ENCODE measurements at regions of chr12 and their contacts with region 1.

Region 1: DNA sequence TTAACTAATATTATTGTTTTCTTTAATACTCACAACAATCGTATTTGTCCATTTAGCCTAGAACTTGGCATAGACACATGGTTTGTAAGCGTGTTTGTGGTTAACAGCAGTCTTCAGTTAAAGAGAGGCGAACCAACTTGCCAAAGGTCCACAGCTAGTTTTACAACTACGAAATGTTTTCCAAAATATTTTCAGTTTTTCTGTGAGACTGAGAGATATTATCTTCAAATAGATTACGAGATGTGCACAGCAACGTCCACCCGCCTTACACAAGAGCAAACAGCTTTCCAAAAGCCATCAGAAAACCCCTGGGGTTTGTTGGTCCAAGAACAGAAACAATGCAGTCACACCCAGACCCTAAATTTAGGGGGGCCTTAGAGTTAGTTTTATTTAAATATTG is 58.6 kb upstream of the RASSF3 start:
- DNase-seq: no peak
- ATAC-seq: no peak
- H3K4me3 ChIP-seq: no peak overlapping the region
- H3K4me3 Mint-ChIP-seq: no peak overlapping the region
- H3K27ac ChIP-seq: no peak overlapping the region
- H3K27ac Mint-ChIP-seq: no peak overlapping the region
- H3K4me1 ChIP-seq: peaks cover 0 to 3% of the 10 kb centered on the region in 2 donors
- H3K4me1 Mint-ChIP-seq: no peaks in the 10 kb centered on the region
- H3K27me3 ChIP-seq: no peaks in the 10 kb centered on the region
- H3K27me3 Mint-ChIP-seq: no peaks in the 10 kb centered on the region
- CTCF ChIP-seq: no peak

Region 2: DNA sequence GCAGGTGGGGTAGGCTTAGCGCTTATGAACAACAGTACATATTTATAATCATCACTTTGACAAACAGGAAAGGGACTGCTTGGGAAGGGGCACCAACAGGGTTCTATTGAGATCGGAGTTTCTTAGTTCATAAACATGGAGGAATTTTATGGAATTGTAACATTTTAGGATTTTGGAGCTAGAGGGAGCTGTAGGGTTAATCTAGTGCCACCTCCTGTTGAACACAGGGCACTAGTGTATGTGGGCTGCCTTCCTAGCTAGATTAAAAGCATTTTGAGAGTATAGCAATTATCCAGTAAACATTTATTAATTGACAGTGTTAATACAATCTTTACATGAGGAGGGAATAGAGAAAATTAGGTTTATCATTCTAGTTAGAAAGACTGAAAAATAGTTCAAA is 249.7 kb after region 1 on chr12:
- CTCF ChIA-PET with region 1: interaction called, 10 read pairs
- POLR2A ChIA-PET with region 1: no interaction called
- intact Hi-C with region 1: loop called (anchors 1 kb)
- DNase-seq: no peak
- ATAC-seq: no peak
- H3K4me3 ChIP-seq: no peak overlapping the region
- H3K4me3 Mint-ChIP-seq: no peak overlapping the region
- H3K27ac ChIP-seq: no peak overlapping the region
- H3K27ac Mint-ChIP-seq: no peak overlapping the region
- H3K4me1 ChIP-seq: no peaks in the 10 kb centered on the region
- H3K4me1 Mint-ChIP-seq: peaks cover 2% of the 10 kb centered on the region
- H3K27me3 ChIP-seq: peaks cover 0 to 9% (median 0%) of the 10 kb centered on the region in 4 experiments
- H3K27me3 Mint-ChIP-seq: peaks cover 36% of the 10 kb centered on the region
- CTCF ChIP-seq: no peak

Region 3: GRCh38 chr12:65584016-65584415 is 1032.3 kb after region 1 on chr12:
- CTCF ChIA-PET with region 1: no interaction called
- POLR2A ChIA-PET with region 1: no interaction called
- intact Hi-C with region 1: no loop called
- DNase-seq: no peak
- ATAC-seq: no peak
- H3K4me3 ChIP-seq: no peak overlapping the region
- H3K4me3 Mint-ChIP-seq: no peak overlapping the region
- H3K27ac ChIP-seq: no peak overlapping the region
- H3K27ac Mint-ChIP-seq: no peak overlapping the region
- H3K4me1 ChIP-seq: no peaks in the 10 kb centered on the region
- H3K4me1 Mint-ChIP-seq: no peaks in the 10 kb centered on the region
- H3K27me3 ChIP-seq: no peaks in the 10 kb centered on the region
- H3K27me3 Mint-ChIP-seq: no peaks in the 10 kb centered on the region
- CTCF ChIP-seq: no peak